Posterior cingulate gyrus (tissue), 11 donors: ENCODE measurements at regions of chrX and their contacts with region 1.

Region 1: GRCh38 chrX:31213941-31214340 is 142.1 kb upstream of the FTHL17 start:
- DNase-seq: peak in 1 of 10 donors; percentile 13

Region 2: GRCh38 chrX:30690330-30690729 is 523.6 kb before region 1 on chrX:
- intact Hi-C with region 1: no loop called
- DNase-seq: no peak

Region 3: GRCh38 chrX:31658360-31658759 is 444.4 kb after region 1 on chrX:
- intact Hi-C with region 1: loop called (anchors 5 kb)
- DNase-seq: no peak